H1 (cell line): ENCODE measurements at regions of chr6 and their contacts with region 1.

Region 1: GRCh38 chr6:116561377-116562018 is 7.9 kb downstream of the CALHM4 start:
- DNase-seq: peak in 1 of 2 experiments; percentile 83
- H3K4me3 ChIP-seq: no peak overlapping the region; a peak in 1 of 8 replicates
- H3K27ac ChIP-seq: no peak overlapping the region
- H3K4me1 ChIP-seq: no peaks in the 10 kb centered on the region
- H3K27me3 ChIP-seq: no peaks in the 10 kb centered on the region
- CTCF ChIP-seq: peak; percentile 38 to 88 (median 84)
- EP300 ChIP-seq: no peak
- POLR2A ChIP-seq: no peak
- RAD21 ChIP-seq: peak; percentile 87

Region 2: GRCh38 chr6:116217069-116217468 is 344.4 kb before region 1 on chr6:
- CTCF ChIA-PET with region 1: interaction called, 10 read pairs
- POLR2A ChIA-PET with region 1: no interaction called
- DNase-seq: no peak
- H3K4me3 ChIP-seq: no peak overlapping the region
- H3K27ac ChIP-seq: no peak overlapping the region
- H3K4me1 ChIP-seq: no peaks in the 10 kb centered on the region
- H3K27me3 ChIP-seq: no peaks in the 10 kb centered on the region
- CTCF ChIP-seq: peak in 1 of 3 experiments; percentile 45; a peak in 2 of 4 replicates
- EP300 ChIP-seq: no peak
- POLR2A ChIP-seq: no peak
- RAD21 ChIP-seq: peak; percentile 31 to 36; a peak in 3 of 4 replicates

Region 3: GRCh38 chr6:116279260-116280063 is 282.0 kb before region 1 on chr6 and contains the start of gene TSPYL1:
- CTCF ChIA-PET with region 1: interaction called, 6 read pairs
- POLR2A ChIA-PET with region 1: interaction called, 16 read pairs
- DNase-seq: peak; percentile 84 to 95
- H3K4me3 ChIP-seq: peak within 1 kb of the TSS; percentile 89 to 100 (median 92)
- H3K27ac ChIP-seq: peak within 1 kb of the TSS; percentile 96
- H3K4me1 ChIP-seq: peaks cover 3 to 14% (median 10%) of the 10 kb centered on the region in 4 experiments; a peak in 5 of 7 replicates
- H3K27me3 ChIP-seq: no peaks in the 10 kb centered on the region
- CTCF ChIP-seq: no peak
- EP300 ChIP-seq: no peak
- POLR2A ChIP-seq: peak; percentile 90 to 99
- RAD21 ChIP-seq: 0 out of 4 replicates have a peak, but pooled peaks of 1 of the 2 experiments have one; percentile 5
- total RNA-seq, gene TSPYL1: 77.9 and 79.1 TPM in 2 replicates

Region 4: DNA sequence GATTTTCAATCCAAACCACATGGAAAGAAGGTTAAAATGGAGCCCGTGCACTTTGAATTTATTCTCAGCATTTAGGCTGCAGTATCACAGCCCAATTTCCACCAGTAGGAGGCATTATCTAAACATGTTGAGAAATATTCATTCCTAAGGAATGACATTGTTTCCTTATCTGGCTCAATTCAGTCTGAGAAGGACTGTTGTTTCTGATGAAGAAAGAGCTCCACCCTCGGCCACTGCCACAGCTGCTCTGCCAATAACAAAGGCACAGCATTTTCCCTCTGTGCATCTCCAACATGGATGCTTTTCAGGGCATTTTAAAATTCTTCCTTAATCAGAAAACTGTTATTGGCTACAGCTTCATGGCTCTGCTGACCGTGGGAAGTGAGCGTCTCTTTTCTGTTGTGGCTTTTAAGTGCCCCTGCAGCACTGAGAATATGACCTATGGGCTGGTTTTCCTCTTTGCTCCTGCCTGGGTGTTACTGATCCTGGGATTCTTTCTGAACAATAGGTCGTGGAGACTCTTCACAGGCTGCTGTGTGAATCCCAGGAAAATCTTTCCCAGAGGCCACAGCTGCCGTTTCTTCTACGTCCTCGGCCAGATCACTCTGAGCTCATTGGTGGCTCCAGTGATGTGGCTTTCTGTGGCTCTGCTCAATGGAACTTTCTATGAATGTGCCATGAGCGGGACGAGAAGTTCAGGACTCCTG is 49.9 kb before region 1 on chr6 and contains the start of gene CALHM5:
- CTCF ChIA-PET with region 1: interaction called, 10 read pairs
- POLR2A ChIA-PET with region 1: no interaction called
- DNase-seq: no peak
- H3K4me3 ChIP-seq: no peak within 1 kb of the TSS
- H3K27ac ChIP-seq: peak within 1 kb of the TSS; percentile 31; the same call in 1 of the 2 replicates
- H3K4me1 ChIP-seq: peaks cover 0 to 11% (median 4%) of the 10 kb centered on the region in 4 experiments; a peak in 4 of 7 replicates
- H3K27me3 ChIP-seq: peaks cover 0 to 1% (median 0%) of the 10 kb centered on the region in 4 experiments; a peak in 1 of 7 replicates
- CTCF ChIP-seq: peak in 2 of 3 experiments; percentile 38 to 66; a peak in 2 of 4 replicates
- EP300 ChIP-seq: no peak
- POLR2A ChIP-seq: no peak
- RAD21 ChIP-seq: peak; percentile 30 to 44
- total RNA-seq, gene CALHM5: 0.09 and 0.17 TPM in 2 replicates

Region 5: GRCh38 chr6:116542426-116542825 is 19.1 kb before region 1 on chr6:
- CTCF ChIA-PET with region 1: interaction called, 22 read pairs
- POLR2A ChIA-PET with region 1: interaction called, 4 read pairs
- DNase-seq: no peak
- H3K4me3 ChIP-seq: no peak overlapping the region
- H3K27ac ChIP-seq: no peak overlapping the region
- H3K4me1 ChIP-seq: peaks cover 0 to 2% (median 0%) of the 10 kb centered on the region in 4 experiments; a peak in 1 of 7 replicates
- H3K27me3 ChIP-seq: no peaks in the 10 kb centered on the region
- CTCF ChIP-seq: no peak
- EP300 ChIP-seq: no peak
- POLR2A ChIP-seq: no peak
- RAD21 ChIP-seq: no peak